SK-N-SH (cell line): ENCODE measurements at regions of chr15 and their contacts with region 1.

Region 1: GRCh38 chr15:41241221-41241964 is 10.3 kb downstream of the CHP1 start:
- DNase-seq: peak; percentile 78
- H3K4me3 ChIP-seq: no peak overlapping the region
- H3K27ac ChIP-seq: peak overlapping the region in 1 of 2 experiments; percentile 65; a peak in 2 of 4 replicates
- H3K4me1 ChIP-seq: peaks cover 0 to 8% of the 10 kb centered on the region in 2 experiments; a peak in 2 of 4 replicates
- H3K27me3 ChIP-seq: no peaks in the 10 kb centered on the region
- CTCF ChIP-seq: no peak
- EP300 ChIP-seq: peak in 1 of 2 experiments; percentile 79; a peak in 1 of 4 replicates
- RAD21 ChIP-seq: 0 out of 2 replicates have a peak, but pooled peaks have one; percentile 10

Region 2: DNA sequence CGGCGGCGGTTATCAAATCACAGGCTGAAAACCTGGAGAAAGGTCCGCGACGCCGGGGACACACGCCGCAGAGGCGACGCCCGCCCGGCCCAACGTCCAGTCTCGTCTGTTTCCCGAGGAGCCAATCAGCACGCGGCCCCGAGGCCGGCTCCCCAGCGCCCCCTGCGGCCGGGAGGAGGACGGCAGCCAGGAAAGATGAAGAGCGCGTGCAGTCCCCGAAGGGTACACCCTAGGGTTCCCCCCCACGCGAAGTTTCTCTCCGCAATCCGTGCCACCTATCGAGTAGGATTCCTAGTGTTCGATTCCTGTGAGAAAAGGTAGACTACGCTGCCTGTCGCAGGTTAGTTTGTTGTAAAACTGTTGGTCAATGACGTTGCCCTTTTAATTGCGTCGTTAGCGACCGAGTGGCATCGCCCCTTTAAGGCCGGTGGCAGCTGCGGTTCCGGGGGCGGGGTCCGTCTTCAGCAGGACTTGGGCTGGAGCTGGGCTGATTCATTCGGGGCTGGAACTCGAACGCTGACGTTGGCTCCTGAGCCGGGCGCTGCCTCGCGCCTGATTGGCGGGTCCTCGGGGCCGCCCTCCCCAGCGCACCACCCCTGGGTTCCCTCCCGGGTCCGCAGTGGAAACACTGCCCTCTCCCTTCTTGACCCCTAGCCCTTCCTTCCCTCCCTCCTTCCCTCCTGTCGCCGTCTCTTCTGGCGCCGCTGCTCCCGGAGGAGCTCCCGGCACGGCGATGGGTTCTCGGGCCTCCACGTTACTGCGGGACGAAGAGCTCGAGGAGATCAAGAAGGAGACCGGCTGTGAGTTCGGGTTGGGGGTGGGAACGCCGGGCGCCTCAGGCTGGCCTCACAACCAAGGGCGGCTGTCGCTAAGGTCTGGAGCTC is 10.5 kb before region 1 on chr15 and contains the starts of genes CHP1 and EXD1:
- CTCF ChIA-PET with region 1: interaction called, 35 read pairs
- POLR2A ChIA-PET with region 1: no interaction called
- DNase-seq: peak; percentile 97
- H3K4me3 ChIP-seq: peak within 1 kb of the TSS; percentile 82 to 89
- H3K27ac ChIP-seq: peak within 1 kb of the TSS; percentile 81 to 89
- H3K4me1 ChIP-seq: peaks cover 0 to 8% of the 10 kb centered on the region in 2 experiments; a peak in 2 of 4 replicates
- H3K27me3 ChIP-seq: no peaks in the 10 kb centered on the region
- CTCF ChIP-seq: peak; percentile 94
- EP300 ChIP-seq: no peak
- RAD21 ChIP-seq: peak; percentile 14; the same call in 1 of the 2 replicates
- polyA plus RNA-seq, gene CHP1: 30.5 and 35.8 TPM in 2 replicates
- polyA plus RNA-seq, gene EXD1: 0.02 and 0.07 TPM in 2 replicates